Activated naive CD4-positive, alpha-beta T cell treated with anti-CD3 and anti-CD28 coated beads for 36 hours (primary cell): ENCODE measurements at regions of chr5 and their contacts with region 1.

Region 1: GRCh38 chr5:52771343-52772039 is 16.2 kb upstream of the ITGA1 start:
- DNase-seq: peak; percentile 63
- H3K4me3 Mint-ChIP-seq: no peak overlapping the region
- H3K27ac Mint-ChIP-seq: no peak overlapping the region
- H3K4me1 Mint-ChIP-seq: peaks cover 46% of the 10 kb centered on the region
- H3K27me3 Mint-ChIP-seq: no peaks in the 10 kb centered on the region

Region 2: GRCh38 chr5:52743970-52744369 is 27.5 kb before region 1 on chr5:
- CTCF ChIA-PET with region 1: no interaction called
- intact Hi-C with region 1: loop called (anchors 1 kb)
- DNase-seq: peak; percentile 66
- H3K4me3 Mint-ChIP-seq: no peak overlapping the region
- H3K27ac Mint-ChIP-seq: peak overlapping the region; percentile 32
- H3K4me1 Mint-ChIP-seq: peaks cover 44% of the 10 kb centered on the region
- H3K27me3 Mint-ChIP-seq: no peaks in the 10 kb centered on the region